Activated naive CD4-positive, alpha-beta T cell treated with anti-CD3 and anti-CD28 coated beads for 36 hours (primary cell): ENCODE measurements at regions of chr2 and their contacts with region 1.

Region 1: GRCh38 chr2:50401772-50402653 is 629.9 kb downstream of the NRXN1 start:
- DNase-seq: peak; percentile 59
- H3K4me3 Mint-ChIP-seq: no peak overlapping the region
- H3K27ac Mint-ChIP-seq: no peak overlapping the region
- H3K4me1 Mint-ChIP-seq: no peaks in the 10 kb centered on the region
- H3K27me3 Mint-ChIP-seq: no peaks in the 10 kb centered on the region

Region 2: GRCh38 chr2:49616800-49617199 is 785.2 kb before region 1 on chr2:
- CTCF ChIA-PET with region 1: no interaction called
- intact Hi-C with region 1: loop called (anchors 5 kb)
- DNase-seq: no peak
- H3K4me3 Mint-ChIP-seq: no peak overlapping the region
- H3K27ac Mint-ChIP-seq: no peak overlapping the region
- H3K4me1 Mint-ChIP-seq: no peaks in the 10 kb centered on the region
- H3K27me3 Mint-ChIP-seq: no peaks in the 10 kb centered on the region

Region 3: GRCh38 chr2:49827366-49827765 is 574.6 kb before region 1 on chr2:
- CTCF ChIA-PET with region 1: no interaction called
- intact Hi-C with region 1: loop called (anchors 10 kb)
- DNase-seq: no peak
- H3K4me3 Mint-ChIP-seq: no peak overlapping the region
- H3K27ac Mint-ChIP-seq: no peak overlapping the region
- H3K4me1 Mint-ChIP-seq: no peaks in the 10 kb centered on the region
- H3K27me3 Mint-ChIP-seq: peaks cover 2% of the 10 kb centered on the region